ENCODE measurements at regions of chrX and their contacts with region 1.

Region 1: DNA sequence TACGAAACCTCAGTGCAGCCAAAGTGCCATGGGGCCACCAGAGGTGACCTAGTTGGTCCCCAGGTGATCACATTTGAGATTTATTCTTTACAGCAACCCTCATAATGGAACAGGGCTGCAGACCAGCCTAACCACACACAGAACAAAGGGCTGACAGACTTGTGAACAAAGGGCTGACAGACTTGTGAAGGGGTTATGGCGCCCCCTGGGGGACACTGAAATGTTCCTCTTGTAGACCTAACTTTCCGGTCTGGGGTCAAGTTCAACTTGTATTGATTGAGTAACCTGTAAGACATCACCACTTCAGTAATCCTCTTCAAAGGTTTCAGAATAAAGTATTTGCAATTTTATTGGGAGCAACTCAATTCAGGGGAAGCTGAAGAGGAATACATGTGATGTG is 175.9 kb upstream of the RPS6KA3 start:
- DNase-seq: peak; percentile 29
- CTCF ChIP-seq: peak; percentile 71

Region 2: GRCh38 chrX:19739683-19740082 is 702.9 kb before region 1 on chrX:
- in situ Hi-C with region 1: no loop called
- DNase-seq: peak; percentile 30
- CTCF ChIP-seq: peak; percentile 68

Region 3: GRCh38 chrX:19981947-19982346 is 460.6 kb before region 1 on chrX:
- in situ Hi-C with region 1: no loop called
- DNase-seq: no peak
- CTCF ChIP-seq: no peak

Region 4: GRCh38 chrX:20252381-20253231 is 190.0 kb before region 1 on chrX:
- in situ Hi-C with region 1: loop called (anchors 10 kb)
- DNase-seq: peak; percentile 19
- CTCF ChIP-seq: peak; percentile 62

Measured in GM13977 (cell line).